ENCODE measurements at regions of chr7 and their contacts with region 1.

Region 1: DNA sequence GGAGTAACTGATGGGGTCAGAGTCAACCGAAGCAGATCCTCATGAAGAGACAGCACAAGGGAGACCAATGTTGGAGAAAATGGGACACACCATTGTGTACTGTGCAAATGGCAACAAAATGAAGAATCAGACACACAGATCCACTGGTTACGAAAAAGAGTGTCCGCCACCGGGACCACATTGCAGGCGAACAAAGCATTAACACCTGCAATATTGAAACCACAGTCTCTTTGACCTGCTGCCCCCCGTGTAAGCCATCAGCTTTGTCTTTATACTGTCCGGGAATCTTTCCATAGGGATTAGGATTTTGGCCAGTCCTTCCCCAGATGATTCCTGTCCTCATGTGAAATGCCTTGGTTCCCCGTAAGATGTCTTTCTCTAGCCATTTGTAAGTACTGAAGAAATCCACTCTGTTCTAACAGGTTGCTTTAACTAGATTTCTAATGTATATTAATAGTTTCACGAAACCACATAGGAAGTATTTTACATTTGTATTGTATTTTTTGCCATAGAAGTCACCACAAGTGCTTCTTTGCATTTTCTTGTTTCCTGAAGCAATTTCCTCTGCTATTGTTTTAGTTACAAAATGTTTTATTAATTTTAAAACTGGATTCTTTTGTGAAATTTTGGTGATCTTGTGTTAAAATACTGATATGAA is 140.8 kb upstream of the NFE2L3 start:
- DNase-seq: no peak

Region 2: GRCh38 chr7:24685708-24686107 is 1325.5 kb before region 1 on chr7:
- intact Hi-C with region 1: no loop called
- DNase-seq: no peak

Region 3: GRCh38 chr7:25976630-25977029 is 34.5 kb before region 1 on chr7:
- intact Hi-C with region 1: loop called in 1 of 2 experiments (anchors 2 kb)
- DNase-seq: no peak